ENCODE measurements at regions of chr5 and their contacts with region 1.

Region 1: GRCh38 chr5:149636851-149637246 is 55.6 kb downstream of the ARHGEF37 start:
- DNase-seq: peak in 1 of 2 experiments; percentile 35
- H3K4me3 ChIP-seq: no peak overlapping the region
- H3K27ac ChIP-seq: no peak overlapping the region
- H3K4me1 ChIP-seq: peaks cover 21% of the 10 kb centered on the region
- H3K27me3 ChIP-seq: no peaks in the 10 kb centered on the region
- CTCF ChIP-seq: peak; percentile 88

Region 2: DNA sequence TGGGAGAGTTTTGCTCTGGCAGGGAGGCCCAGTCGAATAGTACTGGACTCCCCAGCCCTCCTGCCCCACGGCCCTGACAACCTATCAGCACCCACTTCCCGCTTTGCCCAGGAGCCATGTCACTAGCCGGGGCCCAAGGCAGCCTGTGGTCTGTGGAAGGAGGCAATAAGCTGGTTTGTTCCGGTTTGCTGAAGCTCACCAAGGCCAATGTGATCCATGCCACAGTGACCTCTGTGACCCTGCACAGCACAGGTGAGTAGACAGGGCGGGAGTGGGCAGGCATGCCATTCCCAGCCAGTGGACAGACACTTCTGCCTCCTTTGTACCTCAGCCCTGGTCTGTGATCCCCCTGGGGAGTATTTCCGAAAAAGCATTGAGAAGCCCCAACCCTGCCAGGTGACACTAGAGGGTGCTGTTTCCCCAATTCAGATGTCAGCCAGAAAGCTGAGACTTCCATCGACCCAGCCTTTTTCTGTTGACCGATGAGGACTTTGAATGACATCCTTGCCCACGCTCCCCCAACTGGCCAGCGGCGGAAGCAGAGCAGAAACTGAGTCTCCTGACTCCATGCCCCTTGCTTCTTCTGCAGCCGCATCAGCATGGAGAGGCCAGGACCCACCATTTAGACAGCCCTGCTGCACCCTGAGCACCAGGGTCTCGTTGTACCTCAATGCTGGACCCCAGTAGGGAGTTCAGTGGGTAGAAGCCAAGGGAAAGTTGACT is 269.4 kb before region 1 on chr5:
- CTCF ChIA-PET with region 1: no interaction called
- POLR2A ChIA-PET with region 1: no interaction called
- intact Hi-C with region 1: loop called (anchors 5 kb)
- DNase-seq: peak; percentile 64 to 76
- H3K4me3 ChIP-seq: no peak overlapping the region
- H3K27ac ChIP-seq: no peak overlapping the region
- H3K4me1 ChIP-seq: no peaks in the 10 kb centered on the region
- H3K27me3 ChIP-seq: no peaks in the 10 kb centered on the region
- CTCF ChIP-seq: peak; percentile 84

Region 3: DNA sequence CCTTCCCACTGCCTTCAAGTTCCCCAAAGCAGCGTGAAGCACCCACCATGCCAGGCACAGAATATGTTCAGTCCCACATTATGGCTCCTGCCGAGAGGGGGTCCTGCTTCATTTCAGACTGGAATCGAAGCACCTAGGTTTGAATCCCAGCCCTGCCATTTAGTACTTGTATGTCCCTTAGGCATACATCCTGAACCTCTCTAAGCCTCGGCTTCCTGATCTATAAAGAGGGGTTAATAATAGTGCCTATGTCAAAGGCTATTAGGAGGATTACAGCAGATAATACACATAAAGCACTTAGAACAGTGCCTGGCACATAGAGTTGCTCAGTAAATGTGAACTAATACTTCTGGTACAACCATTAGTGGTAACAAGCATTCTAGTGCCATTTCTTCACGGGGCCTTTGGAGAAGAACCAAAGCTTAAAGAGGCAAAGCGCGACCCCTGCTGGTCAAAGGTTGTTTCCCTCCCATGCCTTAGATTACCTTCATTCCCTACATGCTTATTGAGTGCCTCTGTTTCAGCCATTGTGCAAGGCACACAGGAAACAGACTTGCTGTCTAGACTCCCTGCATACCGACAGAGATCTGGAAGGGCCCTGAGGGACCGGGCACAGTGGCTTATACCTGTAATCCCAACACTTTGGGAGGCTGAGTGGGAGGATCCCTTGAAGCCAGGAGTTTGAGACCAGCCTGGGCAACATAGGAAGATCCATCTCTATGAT is 191.5 kb after region 1 on chr5:
- CTCF ChIA-PET with region 1: interaction called, 7 read pairs
- POLR2A ChIA-PET with region 1: no interaction called
- intact Hi-C with region 1: loop called (anchors 1 kb)
- DNase-seq: peak; percentile 75 to 87
- H3K4me3 ChIP-seq: no peak overlapping the region
- H3K27ac ChIP-seq: no peak overlapping the region
- H3K4me1 ChIP-seq: no peaks in the 10 kb centered on the region
- H3K27me3 ChIP-seq: no peaks in the 10 kb centered on the region
- CTCF ChIP-seq: peak; percentile 93

Region 4: DNA sequence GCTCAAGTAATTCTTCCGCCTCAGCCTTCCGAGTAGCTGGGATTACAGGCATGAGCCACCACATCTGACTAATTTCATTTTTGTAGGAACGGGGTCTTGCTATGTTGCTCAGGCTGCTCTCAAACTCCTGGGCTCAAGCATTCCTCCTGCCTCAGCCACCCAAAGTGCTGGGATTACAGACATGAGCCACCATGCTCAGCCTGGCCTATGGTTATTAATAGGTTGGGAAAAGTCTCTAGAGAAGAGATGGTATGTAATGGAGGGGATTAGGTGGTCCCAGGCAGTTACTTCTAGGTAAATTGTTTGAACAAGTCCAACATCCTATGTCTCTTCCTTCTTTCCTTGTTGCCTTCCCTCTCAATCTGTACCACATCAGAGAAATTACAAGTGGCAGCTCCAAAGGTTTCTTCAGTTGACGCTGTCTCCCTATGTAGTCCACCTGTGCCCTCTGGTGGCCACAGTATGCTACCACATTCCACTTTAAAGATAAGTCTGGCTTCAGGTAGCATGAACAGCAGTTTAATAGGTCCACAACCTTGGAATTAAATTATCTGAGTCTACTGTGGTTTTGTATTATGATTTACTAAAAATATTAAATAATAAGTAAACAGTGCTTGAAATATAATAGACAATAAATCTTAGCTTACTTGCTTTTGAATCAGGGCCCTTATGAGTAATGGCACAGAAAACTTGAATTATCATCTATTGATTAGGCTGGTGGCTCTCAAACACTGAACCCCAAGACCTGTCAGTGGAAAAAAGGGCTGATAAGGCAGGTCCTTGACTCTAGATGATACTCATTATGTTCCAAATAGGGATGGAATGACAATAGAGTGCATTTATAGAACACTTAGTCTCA is 353.9 kb after region 1 on chr5:
- CTCF ChIA-PET with region 1: interaction called, 5 read pairs
- POLR2A ChIA-PET with region 1: no interaction called
- intact Hi-C with region 1: loop called (anchors 1 kb)
- DNase-seq: peak; percentile 62 to 70
- H3K4me3 ChIP-seq: no peak overlapping the region
- H3K27ac ChIP-seq: no peak overlapping the region
- H3K4me1 ChIP-seq: peaks cover 15% of the 10 kb centered on the region
- H3K27me3 ChIP-seq: no peaks in the 10 kb centered on the region
- CTCF ChIP-seq: peak; percentile 97

Region 5: DNA sequence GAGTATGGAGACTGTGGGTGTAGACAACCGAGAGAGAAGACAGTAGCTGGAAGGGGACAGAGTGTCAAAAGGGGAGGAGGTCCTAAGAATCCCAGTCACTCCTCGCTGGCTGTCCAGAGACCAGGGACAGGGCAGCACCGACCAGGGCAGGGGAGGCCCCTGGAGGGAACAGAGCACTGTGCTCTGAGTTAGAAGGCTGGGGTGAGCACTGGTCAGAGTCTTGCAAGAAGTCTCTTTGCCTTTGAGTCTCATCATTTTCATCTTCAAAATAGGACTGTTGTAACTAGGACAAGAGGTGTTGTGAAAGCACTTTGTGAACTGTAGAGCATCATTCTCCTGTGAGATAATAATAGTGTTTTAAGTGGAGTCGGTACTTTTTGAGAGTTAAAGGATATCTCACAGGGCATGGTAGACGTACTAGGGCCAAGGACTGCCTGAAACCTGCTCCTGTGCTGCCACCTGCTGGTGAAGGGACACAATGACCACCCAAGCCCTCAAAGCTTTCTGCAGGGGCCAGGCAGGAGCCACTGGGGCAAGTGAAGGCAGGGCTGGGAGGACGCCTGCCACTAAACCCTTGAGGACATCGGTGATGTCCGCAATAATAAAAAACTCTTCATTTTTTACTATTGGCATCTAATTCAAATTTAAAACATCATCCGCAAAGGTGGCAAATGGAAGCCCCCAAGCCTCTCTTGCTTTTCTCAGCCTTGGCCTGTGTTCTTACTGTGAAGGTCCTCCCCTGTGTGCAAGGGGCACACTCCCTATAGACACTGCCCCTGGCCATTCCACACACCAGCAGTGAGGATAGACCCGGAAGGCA is 581.2 kb after region 1 on chr5:
- CTCF ChIA-PET with region 1: no interaction called
- POLR2A ChIA-PET with region 1: no interaction called
- intact Hi-C with region 1: loop called (anchors 5 kb)
- DNase-seq: peak; percentile 51 to 84
- H3K4me3 ChIP-seq: no peak overlapping the region
- H3K27ac ChIP-seq: no peak overlapping the region
- H3K4me1 ChIP-seq: 0 out of 2 replicates have a peak, but pooled peaks cover 7% of the 10 kb centered on the region
- H3K27me3 ChIP-seq: no peaks in the 10 kb centered on the region
- CTCF ChIP-seq: peak; percentile 96